ENCODE measurements at regions of chr5 and their contacts with region 1.

Region 1: GRCh38 chr5:141040771-141041426 is 10.3 kb upstream of the PCDHB1 start:
- DNase-seq: peak; percentile 94
- H3K4me3 ChIP-seq: peak overlapping the region; percentile 46 to 64 (median 54)
- H3K27ac ChIP-seq: peak overlapping the region; percentile 69 to 77 (median 76)
- H3K4me1 ChIP-seq: peaks cover 14 to 22% (median 20%) of the 10 kb centered on the region in 4 donors
- H3K27me3 ChIP-seq: peaks cover 0 to 17% (median 0%) of the 10 kb centered on the region in 4 donors
- CTCF ChIP-seq: peak; percentile 78 to 89 (median 86)
- EP300 ChIP-seq: no peak
- POLR2A ChIP-seq: no peak

Region 2: DNA sequence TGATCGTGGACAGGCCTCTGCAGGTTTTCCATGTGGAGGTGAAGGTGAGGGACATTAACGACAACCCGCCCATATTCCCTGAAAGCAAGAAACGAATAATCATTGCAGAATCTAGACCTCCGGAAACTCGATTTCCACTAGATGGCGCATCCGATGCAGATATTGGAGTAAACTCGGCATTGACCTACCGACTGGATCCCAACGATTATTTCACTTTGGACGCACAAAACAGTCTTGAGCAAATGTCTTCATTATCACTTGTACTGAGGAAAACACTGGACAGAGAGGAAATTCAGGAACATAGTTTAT is 158.4 kb before region 1 on chr5:
- intact Hi-C with region 1: loop called (anchors 1 kb)
- DNase-seq: no peak
- H3K4me3 ChIP-seq: peak overlapping the region; percentile 41 to 56 (median 49)
- H3K27ac ChIP-seq: peak overlapping the region in 2 of 4 donors; percentile 9 to 24
- H3K4me1 ChIP-seq: peaks cover 0 to 14% (median 8%) of the 10 kb centered on the region in 4 donors
- H3K27me3 ChIP-seq: peaks cover 0 to 46% (median 0%) of the 10 kb centered on the region in 4 donors
- CTCF ChIP-seq: peak; percentile 24 to 51 (median 41)
- EP300 ChIP-seq: no peak
- POLR2A ChIP-seq: no peak

Region 3: GRCh38 chr5:140926443-140927227 is 114.3 kb before region 1 on chr5:
- intact Hi-C with region 1: loop called (anchors 1 kb)
- DNase-seq: no peak
- H3K4me3 ChIP-seq: peak overlapping the region; percentile 62 to 64 (median 63)
- H3K27ac ChIP-seq: peak overlapping the region; percentile 72 to 77 (median 74)
- H3K4me1 ChIP-seq: peaks cover 9 to 30% (median 23%) of the 10 kb centered on the region in 4 donors
- H3K27me3 ChIP-seq: peaks cover 0 to 29% (median 3%) of the 10 kb centered on the region in 4 donors
- CTCF ChIP-seq: peak; percentile 73 to 96 (median 85)
- EP300 ChIP-seq: no peak
- POLR2A ChIP-seq: no peak

Region 4: GRCh38 chr5:140966293-140967225 is 74.3 kb before region 1 on chr5 and contains the start of gene PCDHAC2:
- intact Hi-C with region 1: loop called (anchors 1 kb)
- DNase-seq: no peak
- H3K4me3 ChIP-seq: peak within 1 kb of the TSS; percentile 65 to 80 (median 74)
- H3K27ac ChIP-seq: peak within 1 kb of the TSS; percentile 83 to 87 (median 84)
- H3K4me1 ChIP-seq: peaks cover 11 to 73% (median 51%) of the 10 kb centered on the region in 4 donors
- H3K27me3 ChIP-seq: peaks cover 0 to 17% (median 0%) of the 10 kb centered on the region in 4 donors
- CTCF ChIP-seq: no peak
- EP300 ChIP-seq: no peak
- POLR2A ChIP-seq: no peak
- total RNA-seq, gene PCDHAC2: 8.8 to 26.6 (median 18.0) TPM

Measured in esophagus muscularis mucosa (tissue), 4 donors.